ENCODE measurements at regions of chr3 and their contacts with region 1.

Region 1: GRCh38 chr3:37039161-37039846 is 46.0 kb downstream of the MLH1 start:
- DNase-seq: no peak
- ATAC-seq: no peak
- H3K4me3 Mint-ChIP-seq: no peak overlapping the region
- H3K27ac Mint-ChIP-seq: no peak overlapping the region
- H3K4me1 Mint-ChIP-seq: no peaks in the 10 kb centered on the region
- H3K27me3 Mint-ChIP-seq: no peaks in the 10 kb centered on the region
- CTCF ChIP-seq: no peak

Region 2: GRCh38 chr3:37024092-37024491 is 15.2 kb before region 1 on chr3:
- CTCF ChIA-PET with region 1: interaction called, 17 read pairs
- POLR2A ChIA-PET with region 1: no interaction called
- intact Hi-C with region 1: no loop called
- DNase-seq: no peak
- ATAC-seq: no peak
- H3K4me3 Mint-ChIP-seq: no peak overlapping the region
- H3K27ac Mint-ChIP-seq: no peak overlapping the region
- H3K4me1 Mint-ChIP-seq: peaks cover 7% of the 10 kb centered on the region
- H3K27me3 Mint-ChIP-seq: no peaks in the 10 kb centered on the region
- CTCF ChIP-seq: peak; percentile 35

Measured in activated CD8-positive, alpha-beta T cell treated with anti-CD3 and anti-CD28 coated beads for 36 hours (primary cell).